ENCODE measurements at regions of chr7 and their contacts with region 1.

Region 1: GRCh38 chr7:52107355-52107754 is 790.7 kb upstream of the COBL start:
- DNase-seq: no peak
- ATAC-seq: no peak
- H3K4me3 ChIP-seq: no peak overlapping the region
- H3K27ac ChIP-seq: no peak overlapping the region
- H3K4me1 ChIP-seq: no peaks in the 10 kb centered on the region
- H3K27me3 ChIP-seq: no peaks in the 10 kb centered on the region
- CTCF ChIP-seq: no peak

Region 2: GRCh38 chr7:52146871-52147634 is 39.7 kb after region 1 on chr7:
- intact Hi-C with region 1: loop called in 1 of 10 experiments (anchors 2 kb)
- DNase-seq: no peak
- ATAC-seq: no peak
- H3K4me3 ChIP-seq: no peak overlapping the region
- H3K27ac ChIP-seq: no peak overlapping the region
- H3K4me1 ChIP-seq: no peaks in the 10 kb centered on the region
- H3K27me3 ChIP-seq: no peaks in the 10 kb centered on the region
- CTCF ChIP-seq: no peak

Measured in heart right ventricle (tissue), 16 donors.